PC-3 (cell line): ENCODE measurements at regions of chr4 and their contacts with region 1.

Region 1: GRCh38 chr4:156968479-156968984 is 3.1 kb downstream of the PDGFC start:
- DNase-seq: peak; percentile 81
- ATAC-seq: peak; percentile 13; the same call in 1 of the 2 replicates
- H3K4me3 ChIP-seq: peak overlapping the region; percentile 94
- H3K27ac ChIP-seq: no peak overlapping the region
- H3K4me1 ChIP-seq: peaks cover 25% of the 10 kb centered on the region
- H3K27me3 ChIP-seq: no peaks in the 10 kb centered on the region
- CTCF ChIP-seq: peak; percentile 78

Region 2: DNA sequence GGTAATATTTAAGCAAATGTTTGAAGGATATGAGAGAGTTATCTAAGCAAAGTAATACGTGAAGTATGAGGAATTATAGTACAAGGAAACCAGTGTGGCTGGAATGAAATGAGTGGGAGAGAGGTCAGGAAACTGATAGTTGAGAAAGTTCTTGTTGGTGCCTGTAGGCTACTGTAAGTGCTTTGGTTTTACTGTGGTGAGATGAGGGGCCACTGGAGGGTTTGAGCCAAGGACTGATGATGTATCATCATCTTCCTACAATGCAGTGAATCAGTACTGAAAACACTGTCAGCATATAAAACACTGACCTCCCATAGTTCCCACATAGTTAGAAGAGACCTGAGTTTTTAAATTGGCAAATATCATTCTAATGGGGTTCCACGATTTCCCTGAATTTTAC is 647.3 kb before region 1 on chr4:
- CTCF ChIA-PET with region 1: no interaction called
- POLR2A ChIA-PET with region 1: no interaction called
- intact Hi-C with region 1: no loop called
- DNase-seq: peak; percentile 86
- ATAC-seq: peak; percentile 74
- H3K4me3 ChIP-seq: peak overlapping the region; percentile 35; the same call in 1 of the 2 replicates
- H3K27ac ChIP-seq: peak overlapping the region; percentile 94
- H3K4me1 ChIP-seq: peaks cover 31% of the 10 kb centered on the region
- H3K27me3 ChIP-seq: no peaks in the 10 kb centered on the region
- CTCF ChIP-seq: no peak

Region 3: DNA sequence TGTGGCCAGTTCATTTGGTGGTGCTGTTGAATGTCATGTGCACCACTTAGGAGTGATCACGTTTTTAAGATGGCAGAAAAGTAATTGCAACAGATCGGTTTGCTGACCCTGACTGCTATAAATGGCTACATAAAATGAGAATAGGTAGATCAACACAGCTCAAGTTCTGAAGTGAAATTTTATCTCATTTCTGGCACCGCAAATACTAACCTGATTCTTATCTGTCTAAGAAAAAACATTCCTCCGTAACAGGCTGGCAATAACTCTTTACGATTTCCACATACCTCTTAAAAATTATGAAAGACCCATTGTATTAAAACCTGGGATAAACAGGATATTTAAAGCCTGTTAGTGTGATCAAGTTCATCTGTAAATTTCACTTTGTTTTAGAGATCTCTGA is 384.4 kb before region 1 on chr4:
- CTCF ChIA-PET with region 1: no interaction called
- POLR2A ChIA-PET with region 1: no interaction called
- intact Hi-C with region 1: loop called (anchors 5 kb)
- DNase-seq: peak; percentile 76
- ATAC-seq: peak; percentile 82
- H3K4me3 ChIP-seq: peak overlapping the region; percentile 21; the same call in 1 of the 2 replicates
- H3K27ac ChIP-seq: peak overlapping the region; percentile 63
- H3K4me1 ChIP-seq: peaks cover 31% of the 10 kb centered on the region
- H3K27me3 ChIP-seq: no peaks in the 10 kb centered on the region
- CTCF ChIP-seq: no peak

Region 4: DNA sequence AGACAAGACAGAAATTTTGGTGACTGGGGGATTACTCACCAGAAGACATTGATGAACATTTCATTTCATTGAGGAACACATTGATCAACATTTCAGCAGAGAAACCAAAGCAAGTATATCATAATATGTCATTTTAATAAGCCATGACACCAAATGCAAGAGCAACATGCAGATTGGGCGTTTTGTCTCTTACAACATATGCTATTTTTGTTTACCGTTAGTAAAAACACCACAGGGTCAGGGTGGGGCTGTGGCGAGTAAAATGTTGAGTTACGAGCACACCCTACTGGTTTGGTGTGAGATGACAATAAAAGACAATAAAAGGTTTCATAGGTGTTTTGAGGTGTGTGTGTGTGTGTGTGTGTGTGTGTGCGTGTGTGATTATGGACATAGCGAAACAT is 291.4 kb before region 1 on chr4:
- CTCF ChIA-PET with region 1: no interaction called
- POLR2A ChIA-PET with region 1: interaction called, 3 read pairs
- intact Hi-C with region 1: loop called (anchors 1 kb)
- DNase-seq: peak; percentile 71
- ATAC-seq: peak; percentile 77
- H3K4me3 ChIP-seq: peak overlapping the region; percentile 39; the same call in 1 of the 2 replicates
- H3K27ac ChIP-seq: peak overlapping the region; percentile 58
- H3K4me1 ChIP-seq: peaks cover 38% of the 10 kb centered on the region
- H3K27me3 ChIP-seq: no peaks in the 10 kb centered on the region
- CTCF ChIP-seq: peak; percentile 70

Region 5: DNA sequence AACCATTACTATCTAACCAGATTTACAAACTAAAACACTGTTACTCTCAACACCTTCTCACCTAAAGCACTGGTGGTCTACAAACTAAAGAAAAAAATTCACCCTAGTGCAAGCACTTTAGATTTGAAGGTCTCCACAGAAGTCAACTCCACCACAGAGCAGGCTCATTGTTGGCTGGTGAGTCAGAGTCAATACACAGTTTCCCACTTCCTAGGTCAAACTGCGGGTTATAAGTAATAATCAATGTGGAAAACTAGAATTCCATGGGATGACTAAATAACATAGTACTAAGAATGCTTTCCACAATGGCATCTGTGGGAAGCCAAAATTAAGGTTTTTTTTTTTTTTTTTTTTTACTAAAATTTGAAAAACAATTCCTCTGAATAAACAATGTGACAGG is 188.8 kb before region 1 on chr4:
- CTCF ChIA-PET with region 1: no interaction called
- POLR2A ChIA-PET with region 1: no interaction called
- intact Hi-C with region 1: loop called (anchors 2 kb)
- DNase-seq: peak; percentile 84
- ATAC-seq: peak; percentile 66
- H3K4me3 ChIP-seq: no peak overlapping the region
- H3K27ac ChIP-seq: peak overlapping the region; percentile 79
- H3K4me1 ChIP-seq: peaks cover 57% of the 10 kb centered on the region
- H3K27me3 ChIP-seq: no peaks in the 10 kb centered on the region
- CTCF ChIP-seq: no peak

Region 6: DNA sequence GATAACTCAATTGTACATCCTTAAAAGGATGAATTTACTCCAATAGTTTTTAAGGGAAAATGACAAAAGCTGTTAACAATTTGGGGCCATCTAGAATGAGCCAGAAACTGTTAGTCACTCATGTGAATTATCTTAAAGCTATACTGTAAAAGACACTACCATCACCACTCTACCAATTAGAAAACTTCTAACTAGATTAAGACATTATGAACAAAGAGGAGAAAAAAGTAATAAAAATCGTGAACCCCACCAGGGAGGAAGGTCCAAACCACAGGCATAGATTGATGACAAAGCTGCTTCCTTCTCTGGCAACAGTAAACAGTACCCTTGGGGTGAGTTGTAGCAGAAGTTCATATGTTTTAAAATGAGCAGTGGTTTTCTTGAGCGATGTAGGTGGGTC is 103.1 kb before region 1 on chr4:
- CTCF ChIA-PET with region 1: no interaction called
- POLR2A ChIA-PET with region 1: no interaction called
- intact Hi-C with region 1: loop called (anchors 2 kb)
- DNase-seq: no peak
- ATAC-seq: no peak
- H3K4me3 ChIP-seq: no peak overlapping the region
- H3K27ac ChIP-seq: no peak overlapping the region
- H3K4me1 ChIP-seq: no peaks in the 10 kb centered on the region
- H3K27me3 ChIP-seq: no peaks in the 10 kb centered on the region
- CTCF ChIP-seq: no peak

Region 7: DNA sequence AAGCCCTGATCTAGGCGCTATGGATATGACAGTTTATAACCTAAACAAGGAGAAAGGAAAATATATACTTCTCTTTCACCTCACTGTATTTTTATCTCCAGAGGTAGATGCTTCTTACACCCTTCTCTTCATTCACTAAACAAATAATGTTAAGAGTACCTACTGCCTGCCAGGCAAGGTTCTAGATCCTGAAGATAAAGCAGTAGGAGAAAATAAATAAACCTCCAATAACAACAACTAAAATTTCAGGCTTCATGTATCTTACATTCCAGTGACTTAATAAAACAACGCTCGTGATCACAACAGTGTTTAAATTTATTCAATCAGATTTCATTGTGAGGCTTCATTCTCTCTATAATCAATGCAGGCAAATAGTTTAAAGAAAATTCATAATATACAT is 17.6 kb before region 1 on chr4:
- CTCF ChIA-PET with region 1: no interaction called
- POLR2A ChIA-PET with region 1: interaction called, 10 read pairs
- intact Hi-C with region 1: no loop called
- DNase-seq: peak; percentile 43
- ATAC-seq: no peak
- H3K4me3 ChIP-seq: peak overlapping the region; percentile 48; the same call in 1 of the 2 replicates
- H3K27ac ChIP-seq: peak overlapping the region; percentile 5; the same call in 1 of the 2 replicates
- H3K4me1 ChIP-seq: peaks cover 73% of the 10 kb centered on the region
- H3K27me3 ChIP-seq: no peaks in the 10 kb centered on the region
- CTCF ChIP-seq: no peak

Region 8: DNA sequence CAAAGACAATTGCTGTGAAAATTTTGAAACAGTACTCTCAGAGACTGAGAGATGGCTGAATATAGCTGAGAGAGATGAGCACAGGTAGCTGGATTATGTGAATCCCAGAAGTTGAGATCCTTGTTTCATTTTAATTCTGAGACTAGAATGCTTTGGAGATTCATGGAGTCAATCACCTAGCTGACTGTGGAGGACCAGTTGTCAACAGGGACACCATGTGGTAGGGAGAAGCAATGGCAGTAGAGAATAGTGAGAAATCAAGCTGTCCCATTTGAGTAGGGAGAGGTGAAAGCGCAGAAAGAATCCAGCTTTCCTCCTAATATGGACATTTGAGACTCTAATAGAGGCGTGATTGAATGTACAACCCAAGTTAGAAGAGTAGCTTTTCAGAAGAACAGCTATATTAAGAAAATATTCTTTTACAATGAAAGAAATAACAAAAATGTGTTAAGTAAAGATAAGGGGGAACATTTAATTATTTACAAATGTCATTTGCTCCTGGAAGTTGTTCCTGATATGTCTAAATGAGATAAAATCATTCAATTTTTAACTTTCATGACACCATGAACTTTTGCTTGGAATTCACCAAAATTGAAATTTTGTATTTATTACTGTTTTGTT is 77.1 kb after region 1 on chr4:
- CTCF ChIA-PET with region 1: no interaction called
- POLR2A ChIA-PET with region 1: no interaction called
- intact Hi-C with region 1: loop called (anchors 2 kb)
- DNase-seq: peak; percentile 67
- ATAC-seq: peak; percentile 85
- H3K4me3 ChIP-seq: no peak overlapping the region
- H3K27ac ChIP-seq: no peak overlapping the region
- H3K4me1 ChIP-seq: no peaks in the 10 kb centered on the region
- H3K27me3 ChIP-seq: no peaks in the 10 kb centered on the region
- CTCF ChIP-seq: peak; percentile 82